ENCODE measurements at regions of chr14 and their contacts with region 1.

Region 1: DNA sequence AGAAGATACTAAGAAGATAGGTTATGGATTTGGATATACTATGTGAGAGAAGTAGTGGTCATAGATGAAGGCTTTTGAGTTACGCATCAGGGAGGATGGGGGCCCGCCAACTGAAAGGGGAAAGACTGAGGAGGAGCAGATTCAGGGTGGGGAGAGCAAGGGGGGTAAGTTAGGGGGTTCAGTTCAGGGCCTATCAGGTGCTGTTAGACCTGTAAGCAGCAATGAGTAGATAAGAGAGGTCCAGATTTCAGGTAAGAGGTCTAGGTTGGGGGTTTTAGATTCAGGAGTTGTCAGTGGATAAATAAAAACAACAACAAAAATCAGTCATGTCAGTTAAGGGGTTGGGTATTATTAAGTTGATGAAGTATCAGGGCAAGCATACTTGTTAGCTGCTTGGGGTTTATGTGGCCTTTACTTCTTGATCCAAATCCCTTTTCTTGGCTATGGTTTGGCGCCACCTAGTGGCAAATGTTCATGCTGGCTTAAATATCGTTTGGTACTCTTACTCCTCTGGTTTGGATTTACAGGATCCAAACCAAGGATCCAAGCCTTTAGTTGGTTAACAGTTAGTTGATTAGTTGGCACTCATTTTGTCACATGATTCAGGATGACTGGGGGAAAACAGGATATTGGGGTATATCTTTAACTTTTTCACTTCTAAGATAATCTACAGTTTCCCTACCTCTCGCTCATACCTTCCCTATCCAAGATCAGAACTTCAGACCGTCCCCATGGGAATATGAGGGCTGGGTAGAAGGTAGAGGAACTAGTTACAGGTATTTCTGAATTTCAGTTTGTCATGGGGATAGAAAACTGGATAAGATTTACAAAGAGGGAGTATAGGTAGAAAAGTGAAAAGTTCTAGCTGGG is 65.1 kb downstream of the PCNX1 start:
- DNase-seq: peak; percentile 64 to 91
- ATAC-seq: peak; percentile 80

Region 2: DNA sequence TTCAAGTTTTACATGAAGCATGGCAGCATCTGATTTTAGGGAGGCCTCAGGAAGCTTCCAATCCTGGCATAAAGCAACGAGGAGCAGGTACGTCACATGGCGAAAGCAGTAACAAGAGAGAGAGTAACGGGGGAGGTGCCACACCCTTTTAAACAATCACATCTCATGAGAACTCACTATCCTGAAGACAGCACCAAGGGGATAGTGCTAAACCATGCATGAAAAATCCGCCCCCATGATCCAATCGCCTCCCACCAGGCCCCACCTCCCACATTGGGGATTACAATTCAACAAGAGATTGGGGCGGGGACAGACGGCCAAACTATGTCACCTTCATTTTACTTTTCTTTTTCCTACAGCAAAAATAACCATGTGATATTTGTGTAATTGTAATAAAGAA is 155.8 kb before region 1 on chr14:
- intact Hi-C with region 1: loop called in 1 of 2 experiments (anchors 5 kb)
- DNase-seq: no peak
- ATAC-seq: no peak

Region 3: DNA sequence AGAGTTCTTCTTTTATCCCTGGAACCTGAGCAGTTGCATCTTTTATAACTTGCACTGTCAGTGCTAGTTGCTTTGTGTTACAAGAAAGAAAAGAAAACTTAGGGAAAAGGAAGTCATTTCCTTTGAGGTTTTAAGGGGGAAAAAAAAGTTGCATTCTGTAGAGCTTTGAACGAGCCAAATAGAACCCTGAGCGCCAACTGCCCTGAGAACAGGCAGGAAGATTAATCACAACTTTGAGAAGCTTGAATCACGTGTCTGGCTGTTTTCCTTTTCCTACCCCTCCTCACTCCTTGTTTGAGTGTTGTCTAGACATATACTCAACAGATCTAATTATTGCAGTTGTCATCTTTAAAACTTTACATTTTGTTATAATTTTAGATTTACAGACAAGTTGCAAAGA is 52.6 kb before region 1 on chr14:
- intact Hi-C with region 1: loop called in 1 of 2 experiments (anchors 10 kb)
- DNase-seq: no peak
- ATAC-seq: no peak

Region 4: GRCh38 chr14:71267691-71268090 is 295.3 kb after region 1 on chr14:
- intact Hi-C with region 1: no loop called
- DNase-seq: no peak
- ATAC-seq: peak; percentile 40